Activated naive CD4-positive, alpha-beta T cell treated with anti-CD3 and anti-CD28 coated beads for 36 hours (primary cell): ENCODE measurements at regions of chr1 and their contacts with region 1.

Region 1: GRCh38 chr1:43529206-43529731 is 1.4 kb upstream of the PTPRF start:
- DNase-seq: peak; percentile 91
- H3K4me3 Mint-ChIP-seq: no peak overlapping the region
- H3K27ac Mint-ChIP-seq: no peak overlapping the region
- H3K4me1 Mint-ChIP-seq: peaks cover 17% of the 10 kb centered on the region
- H3K27me3 Mint-ChIP-seq: peaks cover 36% of the 10 kb centered on the region

Region 2: DNA sequence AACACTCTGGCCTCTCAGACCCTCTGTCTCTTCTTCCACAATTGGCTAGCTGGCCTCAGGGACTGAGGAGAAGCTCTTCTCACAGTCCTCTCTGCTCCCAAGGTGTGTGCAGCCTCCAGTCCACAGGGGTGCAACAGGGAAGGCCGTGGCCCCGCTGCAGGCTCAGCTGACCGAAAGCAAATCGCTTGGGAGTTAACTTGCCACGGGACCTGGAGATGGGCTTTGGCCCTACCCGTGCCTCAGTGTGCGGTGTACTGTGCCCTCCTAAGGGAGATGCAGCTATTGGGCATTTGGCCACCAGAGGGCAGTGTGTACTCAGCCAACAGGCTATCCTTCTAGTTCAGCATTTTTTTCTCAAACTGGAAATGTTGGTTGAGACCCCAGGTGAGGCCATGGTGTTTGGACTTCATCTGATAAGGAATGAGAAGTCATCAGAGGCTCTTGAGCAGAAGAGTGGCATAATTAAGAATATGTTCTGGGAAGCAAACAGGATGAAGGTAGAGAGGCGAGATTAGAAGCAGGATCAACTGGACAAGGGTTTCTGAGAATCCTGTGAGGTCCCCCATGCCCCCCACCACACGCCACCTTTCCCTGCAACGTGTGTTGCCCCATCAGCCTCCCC is 302.0 kb before region 1 on chr1:
- CTCF ChIA-PET with region 1: interaction called, 5 read pairs
- intact Hi-C with region 1: loop called (anchors 5 kb)
- DNase-seq: peak; percentile 93
- H3K4me3 Mint-ChIP-seq: no peak overlapping the region
- H3K27ac Mint-ChIP-seq: no peak overlapping the region
- H3K4me1 Mint-ChIP-seq: no peaks in the 10 kb centered on the region
- H3K27me3 Mint-ChIP-seq: peaks cover 2% of the 10 kb centered on the region

Region 3: GRCh38 chr1:43639976-43640789 is 110.9 kb after region 1 on chr1:
- CTCF ChIA-PET with region 1: no interaction called
- intact Hi-C with region 1: loop called (anchors 1 kb)
- DNase-seq: no peak
- H3K4me3 Mint-ChIP-seq: no peak overlapping the region
- H3K27ac Mint-ChIP-seq: no peak overlapping the region
- H3K4me1 Mint-ChIP-seq: no peaks in the 10 kb centered on the region
- H3K27me3 Mint-ChIP-seq: peaks cover 3% of the 10 kb centered on the region

Region 4: DNA sequence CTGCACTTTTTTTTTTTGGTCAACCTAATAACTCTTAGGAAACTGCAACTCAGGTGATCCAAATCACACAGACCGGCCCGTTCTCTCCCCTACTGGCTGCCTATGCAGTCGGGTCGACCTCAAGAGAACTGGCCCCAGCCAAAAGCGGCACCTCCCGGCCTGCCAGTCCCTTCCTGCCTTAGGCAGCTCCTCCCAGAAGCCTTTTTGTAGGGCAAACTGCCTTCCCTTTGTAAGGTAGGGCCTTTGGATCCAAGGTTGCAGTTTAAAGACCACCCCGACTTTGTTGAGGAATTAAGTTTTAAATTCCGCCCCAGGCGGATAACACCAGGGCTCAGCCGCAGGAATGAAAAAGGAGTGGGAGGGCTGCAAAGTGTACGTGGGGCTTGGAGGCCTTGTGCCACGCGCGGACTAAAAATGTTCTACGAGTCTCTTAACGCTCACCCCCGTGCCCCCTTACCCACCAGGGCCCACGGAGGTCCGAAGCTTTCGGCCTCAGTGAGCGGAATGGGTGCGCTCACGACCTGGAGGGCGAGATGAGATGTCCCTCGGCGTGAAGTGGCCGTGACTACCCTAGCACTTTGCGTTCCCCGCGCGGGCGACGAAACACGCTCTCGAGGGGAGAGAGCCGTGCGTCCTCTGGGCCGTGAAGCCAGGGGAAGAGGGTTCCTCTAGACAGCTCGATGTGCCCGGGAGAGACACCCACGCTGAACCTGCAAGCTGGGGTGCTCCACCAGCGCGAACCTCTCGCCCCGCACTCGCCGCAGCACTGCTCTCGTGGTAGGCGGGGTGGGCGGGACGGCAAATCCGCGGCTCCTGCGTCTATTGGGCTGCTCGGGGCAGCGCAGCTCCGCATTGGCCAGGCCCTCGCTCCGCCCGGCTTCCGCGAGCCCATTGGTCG is 177.6 kb after region 1 on chr1:
- CTCF ChIA-PET with region 1: no interaction called
- intact Hi-C with region 1: loop called (anchors 2 kb)
- DNase-seq: peak; percentile 94
- H3K4me3 Mint-ChIP-seq: peak overlapping the region; percentile 86
- H3K27ac Mint-ChIP-seq: peak overlapping the region; percentile 53
- H3K4me1 Mint-ChIP-seq: peaks cover 30% of the 10 kb centered on the region
- H3K27me3 Mint-ChIP-seq: no peaks in the 10 kb centered on the region

Region 5: GRCh38 chr1:43763497-43763973 is 234.3 kb after region 1 on chr1:
- CTCF ChIA-PET with region 1: interaction called, 4 read pairs
- intact Hi-C with region 1: loop called (anchors 1 kb)
- DNase-seq: peak; percentile 68
- H3K4me3 Mint-ChIP-seq: no peak overlapping the region
- H3K27ac Mint-ChIP-seq: no peak overlapping the region
- H3K4me1 Mint-ChIP-seq: no peaks in the 10 kb centered on the region
- H3K27me3 Mint-ChIP-seq: no peaks in the 10 kb centered on the region

Region 6: DNA sequence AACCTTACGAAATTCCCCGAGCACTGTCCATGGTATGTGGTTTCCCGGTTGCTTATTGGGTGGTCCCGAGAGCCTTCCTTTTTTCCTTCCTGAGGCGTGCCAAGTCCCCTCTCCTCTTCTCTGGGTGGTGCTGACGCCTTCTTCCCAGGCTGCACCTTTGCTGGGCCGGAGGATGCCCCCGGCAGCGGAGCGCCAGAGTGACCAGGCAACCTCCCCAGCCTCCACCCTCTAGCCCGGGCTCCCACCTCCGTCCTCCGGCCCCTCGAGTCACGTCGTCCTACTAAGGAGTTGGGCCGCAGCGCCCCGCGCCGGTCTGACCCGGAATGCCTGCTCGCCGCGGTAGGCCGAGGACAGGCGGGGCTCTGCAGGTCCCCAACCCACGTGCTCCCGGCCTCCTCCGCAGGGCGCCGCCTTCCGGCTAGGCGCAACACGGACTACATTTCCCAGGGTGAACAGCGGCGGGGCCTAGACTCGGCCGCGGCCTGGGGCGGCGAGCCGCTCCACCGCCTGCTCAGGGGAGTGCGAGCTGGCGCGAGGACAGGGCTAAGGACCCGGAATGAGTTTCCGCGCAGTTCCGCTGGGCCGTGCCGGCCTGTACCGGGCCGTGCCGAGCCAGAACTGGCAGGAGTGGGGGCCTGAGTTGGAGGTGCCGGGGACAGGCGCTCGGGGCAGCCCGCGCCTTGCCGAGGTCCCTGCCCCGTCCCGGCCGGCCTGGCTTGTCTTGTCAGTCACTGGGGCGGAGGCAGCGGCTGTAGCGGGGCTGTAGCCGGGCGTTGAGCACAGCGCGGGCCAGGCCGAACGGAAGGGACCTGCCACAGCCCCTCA is 417.2 kb after region 1 on chr1 and contains the start of gene IPO13:
- CTCF ChIA-PET with region 1: interaction called, 7 read pairs
- intact Hi-C with region 1: loop called (anchors 1 kb)
- DNase-seq: peak; percentile 97
- H3K4me3 Mint-ChIP-seq: peak within 1 kb of the TSS; percentile 90
- H3K27ac Mint-ChIP-seq: peak within 1 kb of the TSS; percentile 88
- H3K4me1 Mint-ChIP-seq: peaks cover 39% of the 10 kb centered on the region
- H3K27me3 Mint-ChIP-seq: no peaks in the 10 kb centered on the region
- total RNA-seq, gene IPO13: 8.0 to 12.4 TPM

Region 7: DNA sequence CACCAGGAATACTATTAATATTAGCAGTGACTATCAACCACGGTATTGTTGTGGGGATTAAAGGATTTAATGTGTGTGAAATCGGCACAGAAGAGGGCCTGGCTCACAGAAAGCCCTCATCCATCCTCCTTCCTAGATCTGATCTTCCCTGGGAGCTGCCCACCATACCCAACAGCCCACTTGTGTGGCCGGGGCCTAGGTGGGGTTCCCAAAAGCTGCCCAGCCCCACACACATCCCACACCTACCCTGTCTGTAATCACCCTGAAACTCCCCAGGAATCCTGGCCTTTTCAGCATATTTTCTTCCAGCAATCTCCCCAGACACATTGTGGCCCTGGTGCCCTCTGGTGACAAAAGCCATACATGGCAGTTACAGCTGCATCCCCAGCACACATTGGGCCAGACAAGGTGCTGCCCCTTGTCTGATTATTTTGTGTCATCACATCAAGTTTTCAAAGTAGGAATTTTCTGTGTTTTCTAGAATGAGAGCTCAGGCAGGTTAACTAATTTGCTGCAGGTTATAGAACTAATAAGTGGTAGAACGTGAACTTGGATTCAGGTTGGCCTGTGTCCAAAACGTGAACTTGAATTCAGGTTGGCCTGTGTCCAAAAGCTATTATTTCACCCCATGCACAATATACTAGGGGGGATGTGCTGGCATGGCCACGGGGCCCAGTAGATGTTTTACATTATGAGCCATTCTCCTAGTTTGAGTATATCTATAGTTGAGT is 507.3 kb after region 1 on chr1:
- CTCF ChIA-PET with region 1: no interaction called
- intact Hi-C with region 1: loop called (anchors 2 kb)
- DNase-seq: peak; percentile 88
- H3K4me3 Mint-ChIP-seq: no peak overlapping the region
- H3K27ac Mint-ChIP-seq: no peak overlapping the region
- H3K4me1 Mint-ChIP-seq: peaks cover 8% of the 10 kb centered on the region
- H3K27me3 Mint-ChIP-seq: no peaks in the 10 kb centered on the region